ENCODE measurements at regions of chr4 and their contacts with region 1.

Region 1: GRCh38 chr4:112759313-112759712 is 122.4 kb downstream of the LARP7 start:
- DNase-seq: peak in 1 of 2 experiments; percentile 65
- H3K4me3 ChIP-seq: peak overlapping the region in 1 of 4 experiments; percentile 35; a peak in 1 of 8 replicates
- H3K27ac ChIP-seq: peak overlapping the region; percentile 78; the same call in 1 of the 2 replicates
- H3K4me1 ChIP-seq: peaks cover 0 to 7% (median 5%) of the 10 kb centered on the region in 4 experiments; a peak in 4 of 7 replicates
- H3K27me3 ChIP-seq: no peaks in the 10 kb centered on the region
- CTCF ChIP-seq: no peak
- EP300 ChIP-seq: peak in 1 of 2 experiments; percentile 79; a peak in 1 of 3 replicates
- POLR2A ChIP-seq: no peak; a peak in 1 of 3 replicates
- RAD21 ChIP-seq: no peak; a peak in 1 of 4 replicates

Region 2: GRCh38 chr4:112747036-112747435 is 12.3 kb before region 1 on chr4:
- CTCF ChIA-PET with region 1: interaction called, 100 read pairs
- POLR2A ChIA-PET with region 1: interaction called, 90 read pairs
- DNase-seq: peak in 1 of 2 experiments; percentile 25
- H3K4me3 ChIP-seq: peak overlapping the region in 1 of 4 experiments; percentile 46; a peak in 1 of 8 replicates
- H3K27ac ChIP-seq: peak overlapping the region; percentile 42; the same call in 1 of the 2 replicates
- H3K4me1 ChIP-seq: peaks cover 4 to 21% (median 12%) of the 10 kb centered on the region in 4 experiments; a peak in 6 of 7 replicates
- H3K27me3 ChIP-seq: no peaks in the 10 kb centered on the region
- CTCF ChIP-seq: no peak
- EP300 ChIP-seq: no peak
- POLR2A ChIP-seq: no peak
- RAD21 ChIP-seq: no peak

Measured in H1 (cell line).